ENCODE measurements at regions of chr5 and their contacts with region 1.

Region 1: DNA sequence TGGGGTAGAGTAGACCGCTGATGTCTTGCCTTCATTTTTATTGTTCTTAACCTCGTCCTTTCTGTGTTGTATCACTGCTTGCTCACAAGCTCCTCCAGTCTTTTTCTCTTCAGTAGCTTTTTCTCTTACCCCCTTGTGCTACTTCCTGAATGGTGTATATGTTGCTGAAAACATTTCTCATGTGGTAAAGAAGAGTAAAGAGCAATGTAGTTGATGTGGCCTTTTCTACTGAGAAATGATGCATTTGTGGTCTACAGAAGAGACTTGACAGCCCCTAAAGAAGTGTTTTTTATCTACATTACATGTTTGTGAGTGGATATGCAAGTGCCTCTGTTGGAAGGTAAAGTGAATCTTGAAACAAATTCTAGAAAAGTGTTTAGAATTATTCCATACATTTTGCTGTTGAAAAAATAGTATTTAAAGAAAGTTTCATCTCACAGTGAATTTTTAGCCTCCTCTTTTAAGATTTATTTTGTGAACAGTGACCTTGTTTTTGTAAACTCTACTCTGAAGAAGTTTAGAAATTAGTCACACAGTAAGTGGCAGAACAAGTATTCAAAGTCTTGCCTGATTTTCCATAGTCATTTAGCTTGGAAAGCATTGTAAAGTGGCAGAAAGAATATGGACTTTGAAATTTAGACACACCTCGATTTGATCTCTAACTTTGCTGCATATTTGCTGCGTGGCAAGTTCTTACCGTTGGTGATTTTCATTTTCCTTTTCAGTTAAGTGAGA is 17.4 kb downstream of the CDC42SE2 start:
- DNase-seq: no peak
- H3K4me3 Mint-ChIP-seq: peak overlapping the region; percentile 61
- H3K27ac Mint-ChIP-seq: peak overlapping the region; percentile 87
- H3K4me1 Mint-ChIP-seq: peaks cover 90% of the 10 kb centered on the region
- H3K27me3 Mint-ChIP-seq: no peaks in the 10 kb centered on the region

Region 2: DNA sequence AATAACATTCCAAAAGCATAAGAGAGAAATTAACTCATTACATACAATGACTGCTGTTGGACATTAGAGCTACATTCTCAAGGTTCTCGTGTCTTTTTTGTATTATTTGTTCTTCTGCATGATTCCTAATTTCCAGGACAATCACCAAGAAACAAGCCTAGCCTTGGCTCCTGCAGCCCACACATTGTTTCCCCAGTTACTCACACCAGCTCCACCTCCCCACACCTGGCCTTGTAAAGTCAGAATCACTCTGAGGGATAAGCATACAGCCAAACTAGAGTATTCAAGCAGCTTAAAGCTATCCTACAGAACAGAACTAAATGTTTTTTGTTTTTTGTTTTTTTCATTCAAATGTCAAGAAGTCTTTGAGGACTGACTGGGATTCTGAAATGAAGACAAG is 305.5 kb before region 1 on chr5:
- CTCF ChIA-PET with region 1: no interaction called
- POLR2A ChIA-PET with region 1: no interaction called
- DNase-seq: no peak
- H3K4me3 Mint-ChIP-seq: no peak overlapping the region
- H3K27ac Mint-ChIP-seq: no peak overlapping the region
- H3K4me1 Mint-ChIP-seq: no peaks in the 10 kb centered on the region
- H3K27me3 Mint-ChIP-seq: peaks cover 16% of the 10 kb centered on the region

Region 3: DNA sequence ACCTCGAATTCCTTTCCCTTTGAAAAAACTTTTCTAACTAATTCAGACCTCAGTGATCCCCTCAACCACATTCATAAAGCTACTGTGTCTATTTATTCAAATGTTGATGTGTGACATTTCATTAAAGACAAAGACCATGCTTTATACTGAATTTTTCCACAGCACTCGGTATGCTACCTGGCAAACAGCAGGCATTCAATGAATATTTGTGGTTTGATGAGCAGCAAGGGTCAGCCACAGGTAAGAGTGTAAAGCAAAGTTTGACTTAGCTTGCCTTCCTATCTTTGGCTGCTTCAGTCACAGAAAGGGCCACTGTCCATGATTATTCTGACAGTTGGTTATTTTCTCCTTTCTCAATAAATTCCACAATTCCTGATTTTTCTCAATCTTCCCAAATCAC is 22.6 kb before region 1 on chr5:
- CTCF ChIA-PET with region 1: interaction called, 34 read pairs
- POLR2A ChIA-PET with region 1: interaction called, 187 read pairs
- DNase-seq: no peak
- H3K4me3 Mint-ChIP-seq: peak overlapping the region; percentile 67
- H3K27ac Mint-ChIP-seq: peak overlapping the region; percentile 96
- H3K4me1 Mint-ChIP-seq: peaks cover 75% of the 10 kb centered on the region
- H3K27me3 Mint-ChIP-seq: no peaks in the 10 kb centered on the region